ENCODE measurements at regions of chr10 and their contacts with region 1.

Region 1: GRCh38 chr10:77104459-77104980 is 533.1 kb downstream of the KCNMA1 start:
- DNase-seq: peak; percentile 60 to 83
- ATAC-seq: peak; percentile 72 to 81
- H3K4me3 ChIP-seq: no peak overlapping the region
- H3K27ac ChIP-seq: peak overlapping the region; percentile 19 to 37 (median 24)
- H3K4me1 ChIP-seq: no peaks in the 10 kb centered on the region
- H3K27me3 ChIP-seq: no peaks in the 10 kb centered on the region
- CTCF ChIP-seq: no peak
- POLR2A ChIP-seq: no peak

Region 2: GRCh38 chr10:77016278-77016815 is 88.2 kb before region 1 on chr10:
- in situ Hi-C with region 1: no loop called
- intact Hi-C with region 1: loop called (anchors 5 kb)
- DNase-seq: no peak
- ATAC-seq: no peak
- H3K4me3 ChIP-seq: no peak overlapping the region
- H3K27ac ChIP-seq: no peak overlapping the region
- H3K4me1 ChIP-seq: peaks cover 21 to 26% of the 10 kb centered on the region in 2 donors
- H3K27me3 ChIP-seq: no peaks in the 10 kb centered on the region
- CTCF ChIP-seq: no peak
- POLR2A ChIP-seq: no peak

Region 3: GRCh38 chr10:77071001-77071511 is 33.5 kb before region 1 on chr10:
- in situ Hi-C with region 1: no loop called
- intact Hi-C with region 1: loop called (anchors 2 kb)
- DNase-seq: peak; percentile 55 to 77
- ATAC-seq: peak; percentile 55 to 63
- H3K4me3 ChIP-seq: no peak overlapping the region
- H3K27ac ChIP-seq: peak overlapping the region; percentile 23 to 55 (median 48)
- H3K4me1 ChIP-seq: no peaks in the 10 kb centered on the region
- H3K27me3 ChIP-seq: no peaks in the 10 kb centered on the region
- CTCF ChIP-seq: no peak
- POLR2A ChIP-seq: no peak

Measured in gastrocnemius medialis (tissue), 4 donors.